Posterior vena cava (tissue), 2 donors: ENCODE measurements at regions of chr4 and their contacts with region 1.

Region 1: DNA sequence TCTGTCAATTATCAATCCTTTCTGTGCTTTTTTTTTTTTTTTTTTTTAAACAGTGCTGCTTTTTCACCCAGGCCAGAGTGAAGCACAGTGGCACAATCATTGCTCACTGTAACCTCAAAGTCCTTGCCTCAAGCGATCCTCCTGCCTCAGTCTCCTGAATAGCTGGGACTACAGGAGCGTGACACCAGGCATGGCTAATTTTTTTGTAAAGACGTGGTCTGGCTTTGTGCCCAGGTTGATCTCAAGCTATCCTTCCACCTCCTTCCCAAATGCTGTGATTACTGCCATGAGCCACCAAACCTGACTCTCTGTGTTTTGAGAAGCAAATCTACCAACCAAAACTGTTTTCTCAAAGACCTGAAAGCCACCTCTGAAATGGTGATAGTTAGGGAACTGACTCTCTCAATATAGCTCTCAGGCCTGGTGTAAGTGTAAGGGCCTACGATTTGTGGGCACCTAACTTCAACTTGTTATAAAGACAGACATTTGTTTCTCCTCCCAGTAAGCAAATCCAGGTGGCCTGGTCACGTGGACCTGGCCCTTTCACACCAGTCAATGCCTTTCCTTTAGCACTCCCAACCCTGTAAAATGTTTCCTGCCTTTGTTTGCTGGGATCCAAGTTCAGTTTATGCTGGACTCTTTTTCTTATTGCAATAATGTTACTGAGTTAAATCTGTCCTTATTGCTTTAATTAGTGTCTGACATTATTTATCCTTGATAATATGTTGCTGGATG is 2015.9 kb downstream of the PCDH7 start:
- DNase-seq: no peak

Region 2: DNA sequence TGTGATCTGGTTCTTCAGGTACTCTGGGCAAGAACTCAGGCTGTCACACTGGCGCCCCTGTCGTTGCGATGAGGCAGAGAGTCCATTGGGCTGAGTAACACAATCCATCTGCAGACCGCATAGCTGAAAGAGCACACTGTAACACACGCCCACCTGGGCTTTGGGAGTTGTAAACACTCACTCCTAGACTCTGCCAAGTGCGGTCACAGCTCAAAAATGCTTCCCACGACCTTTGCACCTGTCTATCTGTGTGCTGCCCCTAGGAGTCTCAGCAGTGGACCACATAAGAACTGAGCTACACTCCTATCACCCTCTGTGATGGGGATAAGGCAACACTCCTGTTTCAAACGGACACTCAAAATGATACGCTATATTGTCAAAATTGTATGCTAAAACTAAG is 12.5 kb after region 1 on chr4:
- intact Hi-C with region 1: loop called in 1 of 2 experiments (anchors 1 kb)
- DNase-seq: no peak

Region 3: GRCh38 chr4:32789026-32789608 is 53.1 kb after region 1 on chr4:
- intact Hi-C with region 1: loop called in 1 of 2 experiments (anchors 2 kb)
- DNase-seq: no peak